Ascending aorta (tissue), 2 donors: ENCODE measurements at regions of chr15 and their contacts with region 1.

Region 1: GRCh38 chr15:74156678-74157411 is 16.7 kb upstream of the ISLR start:
- DNase-seq: peak in 1 of 2 donors; percentile 80
- H3K4me3 ChIP-seq: no peak overlapping the region
- H3K27ac ChIP-seq: peak overlapping the region; percentile 59 to 72
- H3K4me1 ChIP-seq: peaks cover 3 to 25% of the 10 kb centered on the region in 2 donors
- H3K27me3 ChIP-seq: no peaks in the 10 kb centered on the region
- CTCF ChIP-seq: no peak

Region 2: DNA sequence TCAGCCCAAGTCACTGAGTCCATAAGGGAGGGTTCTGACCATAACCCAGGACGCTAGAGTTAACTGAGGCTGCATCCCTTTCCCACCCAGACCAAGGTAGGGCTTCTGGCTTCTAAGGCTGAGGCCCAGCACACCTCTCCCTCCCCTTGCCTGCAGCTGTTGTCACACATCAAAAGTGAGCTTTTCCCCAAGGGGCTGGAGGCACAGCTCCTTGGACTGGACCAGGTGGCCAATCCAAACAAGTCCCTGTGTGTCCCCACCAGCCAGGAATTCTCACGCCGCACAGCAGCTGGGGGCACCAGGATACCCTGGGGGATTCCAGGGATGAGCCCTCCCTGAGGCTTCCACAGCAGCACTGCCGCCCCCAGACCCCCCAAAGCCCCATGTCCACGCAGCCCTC is 48.7 kb before region 1 on chr15:
- intact Hi-C with region 1: no loop called
- DNase-seq: no peak
- H3K4me3 ChIP-seq: no peak overlapping the region
- H3K27ac ChIP-seq: no peak overlapping the region
- H3K4me1 ChIP-seq: no peaks in the 10 kb centered on the region
- H3K27me3 ChIP-seq: no peaks in the 10 kb centered on the region
- CTCF ChIP-seq: no peak

Region 3: DNA sequence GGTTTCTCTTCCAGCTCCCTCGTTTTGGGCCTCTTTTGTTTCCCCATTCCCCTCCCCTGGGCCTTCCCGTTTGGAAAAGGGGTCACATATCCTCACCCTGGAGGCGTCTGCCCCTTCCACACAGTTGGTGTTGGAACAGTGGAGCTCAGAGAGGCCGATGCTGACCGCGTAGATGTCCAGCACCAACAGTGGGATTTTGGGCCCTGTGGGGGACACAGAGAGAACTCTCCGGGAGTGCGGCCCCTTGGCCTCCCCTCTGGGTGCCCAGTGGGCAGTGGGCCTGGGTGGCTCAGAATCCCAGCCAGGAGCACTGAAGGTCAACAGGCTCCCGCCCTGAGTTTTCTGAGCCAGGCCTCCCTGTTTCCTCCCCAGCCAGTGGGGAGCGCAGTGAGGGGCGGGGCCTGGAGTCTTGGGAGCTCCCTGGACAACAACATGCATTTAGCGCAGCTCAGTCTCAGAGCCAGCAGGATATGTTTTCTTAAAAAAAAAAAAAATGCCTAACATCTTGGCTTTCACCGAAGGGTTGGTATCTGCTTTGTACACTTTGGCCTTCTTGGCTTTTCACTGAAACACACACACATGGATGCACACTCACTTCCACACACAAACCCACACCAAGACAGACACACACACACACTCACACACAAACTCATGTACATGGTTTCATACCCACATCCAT is 16.0 kb after region 1 on chr15:
- intact Hi-C with region 1: loop called (anchors 2 kb)
- DNase-seq: peak in 1 of 2 donors; percentile 81
- H3K4me3 ChIP-seq: peak overlapping the region; percentile 24 to 57
- H3K27ac ChIP-seq: peak overlapping the region; percentile 83 to 85
- H3K4me1 ChIP-seq: peaks cover 32 to 54% of the 10 kb centered on the region in 2 donors
- H3K27me3 ChIP-seq: no peaks in the 10 kb centered on the region
- CTCF ChIP-seq: no peak

Region 4: DNA sequence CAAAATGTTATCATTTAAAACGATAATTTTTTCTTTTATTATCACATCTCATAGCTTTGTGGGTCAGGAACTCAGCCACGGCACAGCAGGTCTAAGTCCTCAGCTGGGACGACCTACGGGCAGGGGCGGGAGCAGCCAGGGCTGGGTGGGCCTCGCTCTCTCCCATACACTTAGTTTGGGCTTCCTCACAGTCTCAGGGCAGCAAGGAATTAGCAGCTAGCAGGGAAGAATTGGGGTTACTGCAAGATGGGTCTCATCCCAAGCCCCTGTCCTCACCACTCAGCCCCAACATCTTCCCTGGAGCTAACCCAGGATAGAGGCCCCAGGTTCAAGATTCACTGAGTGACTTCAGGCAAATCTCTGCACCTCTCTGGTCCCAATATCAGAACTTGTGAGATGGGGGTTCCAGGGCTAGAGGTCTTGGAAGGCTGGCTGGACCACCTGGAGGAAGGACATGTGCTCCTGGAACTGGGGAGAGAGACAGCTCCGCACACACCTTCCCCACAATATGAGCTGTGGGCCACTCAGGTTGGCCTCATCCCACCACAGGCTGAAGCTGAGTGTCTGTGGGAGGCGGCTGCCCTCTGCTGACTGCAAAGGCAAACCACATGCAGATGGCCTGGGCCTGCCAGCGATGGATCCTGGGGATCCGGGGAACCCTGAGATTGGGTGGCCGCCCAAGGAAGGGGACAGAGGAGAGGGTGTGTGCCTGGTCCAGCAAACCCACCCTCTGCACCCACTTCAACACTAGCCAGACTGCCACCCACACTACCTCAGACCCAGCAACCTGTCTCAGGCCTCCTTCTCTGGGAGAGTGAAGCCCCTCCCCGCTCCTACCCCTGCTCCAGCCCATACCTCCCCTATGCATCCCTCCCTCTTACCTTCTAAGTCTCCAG is 165.6 kb after region 1 on chr15:
- intact Hi-C with region 1: no loop called
- DNase-seq: peak in 1 of 2 donors; percentile 75
- H3K4me3 ChIP-seq: no peak overlapping the region
- H3K27ac ChIP-seq: no peak overlapping the region
- H3K4me1 ChIP-seq: peaks cover 12 to 19% of the 10 kb centered on the region in 2 donors
- H3K27me3 ChIP-seq: no peaks in the 10 kb centered on the region
- CTCF ChIP-seq: peak; percentile 85 to 93 (median 91)